Ascending aorta (tissue), 2 donors: ENCODE measurements at regions of chr11 and their contacts with region 1.

Region 1: GRCh38 chr11:5808500-5809121 is at the start of gene OR52N2:
- DNase-seq: peak in 1 of 2 donors; percentile 79
- H3K4me3 ChIP-seq: peak within 1 kb of the TSS; percentile 49 to 63
- H3K27ac ChIP-seq: no peak within 1 kb of the TSS
- H3K4me1 ChIP-seq: no peaks in the 10 kb centered on the region
- H3K27me3 ChIP-seq: no peaks in the 10 kb centered on the region
- CTCF ChIP-seq: peak; percentile 71 to 86 (median 72)
- total RNA-seq, gene OR52N2: not detected

Region 2: GRCh38 chr11:4636962-4637661 is 1171.5 kb before region 1 on chr11 and contains the start of gene OR51D1:
- intact Hi-C with region 1: loop called (anchors 5 kb)
- DNase-seq: peak in 1 of 2 donors; percentile 72
- H3K4me3 ChIP-seq: peak within 1 kb of the TSS in 1 of 2 donors; percentile 44
- H3K27ac ChIP-seq: no peak within 1 kb of the TSS
- H3K4me1 ChIP-seq: peaks cover 0 to 2% of the 10 kb centered on the region in 2 donors
- H3K27me3 ChIP-seq: no peaks in the 10 kb centered on the region
- CTCF ChIP-seq: peak; percentile 41 to 83 (median 78)
- total RNA-seq, gene OR51D1: not detected

Region 3: GRCh38 chr11:5123802-5124521 is 684.6 kb before region 1 on chr11:
- intact Hi-C with region 1: loop called (anchors 2 kb)
- DNase-seq: no peak
- H3K4me3 ChIP-seq: no peak overlapping the region
- H3K27ac ChIP-seq: no peak overlapping the region
- H3K4me1 ChIP-seq: no peaks in the 10 kb centered on the region
- H3K27me3 ChIP-seq: no peaks in the 10 kb centered on the region
- CTCF ChIP-seq: peak; percentile 14 to 57 (median 45)

Region 4: DNA sequence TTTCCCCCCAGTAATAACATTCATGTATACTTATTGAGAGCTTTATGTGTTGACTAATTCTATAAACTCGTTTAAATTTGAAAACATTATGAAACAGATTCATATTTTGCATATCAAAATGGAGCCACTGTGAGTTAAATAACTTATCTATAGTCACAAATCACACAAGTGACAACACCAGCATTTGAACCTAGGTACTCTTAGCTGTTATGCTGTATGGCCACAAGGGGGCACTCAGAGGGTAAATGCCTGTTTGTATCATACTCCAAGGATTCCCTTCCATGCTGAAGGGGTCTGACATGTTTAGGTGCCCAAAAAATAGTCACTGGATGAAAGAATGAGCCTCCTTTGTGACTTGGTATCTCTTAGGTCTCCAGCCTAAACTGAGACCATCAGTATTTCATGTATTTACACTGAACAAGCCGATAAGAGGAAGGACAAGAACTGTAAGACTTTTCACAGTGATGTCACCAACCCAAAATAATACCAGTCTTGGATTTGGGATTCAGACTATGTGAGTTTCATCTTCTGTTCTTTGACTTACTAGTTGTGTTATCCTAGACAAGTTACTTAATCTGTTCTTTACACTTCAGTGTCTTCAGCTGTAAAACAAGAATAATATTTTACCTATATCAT is 332.3 kb before region 1 on chr11:
- intact Hi-C with region 1: loop called (anchors 1 kb)
- DNase-seq: no peak
- H3K4me3 ChIP-seq: no peak overlapping the region
- H3K27ac ChIP-seq: no peak overlapping the region
- H3K4me1 ChIP-seq: no peaks in the 10 kb centered on the region
- H3K27me3 ChIP-seq: no peaks in the 10 kb centered on the region
- CTCF ChIP-seq: peak; percentile 39 to 63 (median 59)

Region 5: GRCh38 chr11:5600374-5600851 is 208.2 kb before region 1 on chr11:
- intact Hi-C with region 1: loop called (anchors 2 kb)
- DNase-seq: peak in 1 of 2 donors; percentile 87
- H3K4me3 ChIP-seq: no peak overlapping the region
- H3K27ac ChIP-seq: peak overlapping the region; percentile 68 to 79
- H3K4me1 ChIP-seq: peaks cover 5% of the 10 kb centered on the region in 2 donors
- H3K27me3 ChIP-seq: no peaks in the 10 kb centered on the region
- CTCF ChIP-seq: peak; percentile 35 to 86 (median 67)

Region 6: DNA sequence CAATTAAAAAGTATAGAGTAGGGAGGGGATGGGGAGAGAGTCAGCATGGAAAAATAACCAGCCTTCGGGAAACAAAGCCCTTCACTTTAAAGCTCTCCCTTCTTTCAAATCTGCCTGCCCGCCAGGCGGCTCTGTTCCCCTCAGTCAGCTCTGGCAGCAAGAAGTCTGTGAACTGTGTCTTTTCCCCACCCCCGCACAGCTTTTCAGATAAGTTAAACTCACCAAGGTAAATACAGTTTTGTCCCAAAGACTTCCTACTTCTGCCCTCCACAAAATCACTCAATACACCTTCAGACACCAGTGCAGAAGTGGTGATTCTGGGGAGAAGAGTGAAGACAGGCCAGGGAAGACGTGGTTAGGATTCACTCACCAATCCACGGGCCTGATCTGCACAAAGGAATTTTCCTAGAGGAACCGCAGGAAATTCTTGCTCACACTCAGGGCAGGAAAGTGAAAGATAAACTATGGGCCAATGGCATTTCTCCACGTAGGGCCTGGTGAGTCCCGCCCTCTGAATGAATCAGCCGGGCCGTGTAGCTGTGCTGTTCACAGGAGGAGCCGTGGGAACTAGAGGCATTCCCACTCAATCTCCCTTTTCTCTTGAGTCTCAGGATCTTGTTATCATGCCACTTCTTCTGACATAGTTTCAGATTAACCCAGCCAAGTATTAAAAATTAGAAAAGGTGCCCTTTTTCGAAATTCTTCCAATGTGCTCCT is 123.8 kb before region 1 on chr11 and contains the start of gene TRIM5:
- intact Hi-C with region 1: loop called (anchors 5 kb)
- DNase-seq: peak; percentile 70 to 96
- H3K4me3 ChIP-seq: peak within 1 kb of the TSS; percentile 60 to 64
- H3K27ac ChIP-seq: peak within 1 kb of the TSS; percentile 88 to 94
- H3K4me1 ChIP-seq: peaks cover 3 to 12% of the 10 kb centered on the region in 2 donors
- H3K27me3 ChIP-seq: no peaks in the 10 kb centered on the region
- CTCF ChIP-seq: peak; percentile 48 to 72 (median 55)
- total RNA-seq, gene TRIM5: 45.1 TPM

Region 7: DNA sequence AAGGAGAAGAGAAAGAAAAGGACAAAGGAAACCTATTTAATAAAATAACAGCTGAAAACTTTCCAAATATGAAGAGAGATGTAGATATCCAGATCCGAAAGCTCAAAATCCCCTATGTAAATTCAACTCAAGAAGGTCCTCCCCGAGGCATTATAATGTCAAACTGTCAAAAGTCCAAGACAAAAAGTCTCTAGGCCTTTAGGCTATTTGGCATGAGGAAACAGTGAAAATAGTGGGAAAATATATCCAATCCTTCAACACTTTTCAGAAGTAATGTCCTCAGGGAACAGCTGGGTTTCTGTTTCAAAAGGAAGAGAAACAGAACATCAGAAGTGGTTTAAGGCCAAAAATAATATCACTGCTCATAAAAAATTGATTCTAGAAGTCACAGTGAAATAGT is 70.0 kb after region 1 on chr11:
- intact Hi-C with region 1: no loop called
- DNase-seq: no peak
- H3K4me3 ChIP-seq: no peak overlapping the region
- H3K27ac ChIP-seq: no peak overlapping the region
- H3K4me1 ChIP-seq: no peaks in the 10 kb centered on the region
- H3K27me3 ChIP-seq: no peaks in the 10 kb centered on the region
- CTCF ChIP-seq: no peak